Activated CD4-positive, alpha-beta T cell treated with anti-CD3 and anti-CD28 coated beads, Interleukin-2, amount 10 ng/mL, durations not matched to agents 24 days and 14 days (primary cell): ENCODE measurements at regions of chr2 and their contacts with region 1.

Region 1: DNA sequence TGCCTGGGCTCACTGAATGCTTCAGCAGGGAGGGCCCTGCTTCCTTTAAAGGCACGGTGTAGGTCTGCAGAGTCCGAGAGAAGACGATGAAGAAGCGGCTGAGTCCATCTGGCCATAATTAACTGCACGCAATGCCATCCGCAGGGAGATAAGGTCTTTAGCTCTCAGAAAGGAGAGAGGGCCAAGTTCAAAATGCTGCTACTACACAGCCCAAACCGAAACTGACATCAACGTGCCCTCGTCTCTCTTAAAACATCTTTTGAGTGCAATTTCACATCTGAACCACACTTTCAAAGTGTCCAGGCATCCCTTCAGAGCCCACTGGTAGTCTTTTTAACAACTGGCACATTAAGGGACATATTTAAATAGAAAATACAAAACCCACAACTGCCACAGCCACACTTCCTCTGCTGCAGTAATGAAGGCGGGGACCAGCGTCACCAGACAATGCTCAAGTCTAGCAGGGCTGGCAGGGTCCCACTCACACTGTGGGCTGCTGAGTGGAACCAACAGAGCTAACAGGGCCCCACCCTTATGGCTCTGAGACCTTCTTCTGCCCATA is 35.8 kb downstream of the ST3GAL5 start:
- DNase-seq: peak; percentile 88
- H3K4me3 Mint-ChIP-seq: peak overlapping the region; percentile 76
- H3K27ac Mint-ChIP-seq: peak overlapping the region; percentile 97
- H3K4me1 Mint-ChIP-seq: peaks cover 61% of the 10 kb centered on the region
- H3K27me3 Mint-ChIP-seq: no peaks in the 10 kb centered on the region

Region 2: GRCh38 chr2:85865539-85866164 is 12.6 kb after region 1 on chr2:
- intact Hi-C with region 1: loop called (anchors 1 kb)
- DNase-seq: no peak
- H3K4me3 Mint-ChIP-seq: no peak overlapping the region
- H3K27ac Mint-ChIP-seq: peak overlapping the region; percentile 27
- H3K4me1 Mint-ChIP-seq: peaks cover 48% of the 10 kb centered on the region
- H3K27me3 Mint-ChIP-seq: no peaks in the 10 kb centered on the region

Region 3: DNA sequence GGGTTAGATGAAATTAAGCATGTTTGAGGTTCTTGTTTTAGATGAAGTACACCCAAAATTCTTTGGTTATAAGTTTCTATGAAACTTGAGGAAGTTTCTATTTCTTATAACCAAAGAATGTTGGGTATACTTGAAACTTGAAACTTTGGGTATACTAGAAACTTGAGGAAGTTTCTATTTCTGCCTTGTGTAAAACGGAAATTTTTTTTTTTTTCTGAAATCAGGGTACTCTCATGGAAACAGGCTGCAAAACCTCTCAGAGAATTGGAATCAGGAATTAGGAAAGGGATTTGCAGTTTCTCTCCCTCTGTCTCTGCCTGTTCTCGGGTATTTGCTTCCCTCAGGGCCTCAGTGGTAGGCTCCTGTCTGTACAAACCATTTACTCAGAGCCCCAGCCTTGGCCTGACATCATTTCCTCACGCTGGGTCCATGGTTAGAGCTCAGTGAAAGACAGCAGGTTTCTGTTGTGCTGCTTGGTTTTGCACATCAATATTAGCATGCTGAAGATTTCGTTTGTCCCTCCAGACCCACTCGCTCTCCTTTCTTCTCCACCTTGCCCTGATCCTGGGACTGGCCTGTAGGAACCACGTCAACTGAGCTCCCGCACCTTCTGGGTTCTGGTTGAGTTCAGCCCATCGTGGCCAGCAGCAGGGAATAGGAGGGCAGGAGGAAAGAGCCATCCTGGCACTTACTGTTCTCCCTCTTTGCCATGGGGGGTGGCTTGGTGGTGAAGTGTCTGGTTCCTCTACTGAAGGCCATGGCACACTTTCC is 146.2 kb after region 1 on chr2:
- intact Hi-C with region 1: loop called (anchors 5 kb)
- DNase-seq: peak; percentile 88
- H3K4me3 Mint-ChIP-seq: peak overlapping the region; percentile 56
- H3K27ac Mint-ChIP-seq: peak overlapping the region; percentile 83
- H3K4me1 Mint-ChIP-seq: peaks cover 63% of the 10 kb centered on the region
- H3K27me3 Mint-ChIP-seq: no peaks in the 10 kb centered on the region

Region 4: DNA sequence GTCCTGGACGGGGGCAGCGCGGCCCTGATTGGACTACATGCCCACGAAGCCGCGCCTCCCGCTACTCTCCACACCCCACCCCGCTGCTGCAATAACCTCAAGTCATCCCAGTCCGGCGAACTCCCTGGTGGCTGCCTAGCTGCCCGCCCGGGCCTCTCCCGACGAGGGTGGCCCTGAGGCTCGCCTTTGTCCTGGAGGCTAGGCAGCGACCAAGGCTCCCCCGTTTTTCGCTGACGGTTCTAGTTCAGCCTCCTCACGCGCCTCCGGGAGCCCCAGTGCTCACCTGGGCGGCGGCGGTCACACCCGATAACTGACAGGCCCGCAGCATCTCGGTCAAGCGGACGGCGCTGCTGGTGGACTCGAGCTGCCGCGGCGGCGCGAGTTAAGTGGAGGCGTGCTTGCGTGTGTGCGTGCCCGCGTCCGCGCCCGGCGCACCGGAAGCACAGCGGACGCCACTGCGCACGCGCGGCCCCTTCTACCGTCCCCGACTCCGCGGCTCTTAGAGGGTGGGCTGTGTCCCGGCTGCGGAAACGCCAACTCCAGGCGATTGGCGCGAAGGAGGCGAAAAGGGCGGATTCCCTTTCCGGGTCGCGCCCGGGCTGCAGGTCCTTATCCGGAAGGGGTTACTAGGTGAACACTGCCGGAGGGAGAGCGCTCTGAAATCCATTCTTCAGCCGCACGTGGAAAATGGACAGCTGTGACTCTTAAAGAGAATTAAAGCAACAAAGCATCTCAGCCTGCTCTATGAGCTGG is 342.2 kb after region 1 on chr2 and contains the start of gene IMMT:
- intact Hi-C with region 1: loop called (anchors 10 kb)
- DNase-seq: peak; percentile 98
- H3K4me3 Mint-ChIP-seq: peak within 1 kb of the TSS; percentile 99
- H3K27ac Mint-ChIP-seq: peak within 1 kb of the TSS; percentile 97
- H3K4me1 Mint-ChIP-seq: peaks cover 36% of the 10 kb centered on the region
- H3K27me3 Mint-ChIP-seq: no peaks in the 10 kb centered on the region
- total RNA-seq, gene IMMT: 181 and 188 TPM in 2 replicates